Left ventricle myocardium superior (tissue), 1 donor: ENCODE measurements at regions of chr3 and their contacts with region 1.

Region 1: DNA sequence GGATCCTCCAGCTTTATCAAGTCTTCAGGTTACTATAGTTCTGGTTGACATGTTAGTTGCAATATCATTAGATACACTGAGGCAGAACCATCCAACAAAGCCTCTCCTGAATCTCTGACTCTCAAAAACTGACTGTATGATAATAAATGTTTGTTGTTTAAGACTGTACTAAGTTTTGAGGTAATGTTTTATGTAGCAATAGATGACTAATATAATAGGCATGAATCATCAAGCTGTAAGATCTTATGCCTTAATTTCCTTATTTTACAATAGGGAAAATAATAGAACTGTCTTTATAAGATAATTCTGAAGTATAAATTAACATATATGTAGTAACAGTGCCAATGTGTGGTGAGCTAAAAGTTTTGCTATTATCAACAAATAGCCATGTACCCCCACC is 88.9 kb upstream of the TBC1D5 start:
- DNase-seq: no peak
- ATAC-seq: no peak

Region 2: GRCh38 chr3:17645072-17645698 is 186.2 kb before region 1 on chr3:
- intact Hi-C with region 1: loop called (anchors 10 kb)
- DNase-seq: no peak
- ATAC-seq: peak; percentile 71

Region 3: GRCh38 chr3:17882981-17883380 is 51.6 kb after region 1 on chr3:
- intact Hi-C with region 1: no loop called
- DNase-seq: no peak
- ATAC-seq: no peak